ENCODE measurements at regions of chr19 and their contacts with region 1.

Region 1: GRCh38 chr19:8355631-8356402 is 8.1 kb upstream of the ANGPTL4 start:
- DNase-seq: no peak
- ATAC-seq: peak; percentile 70
- H3K4me3 Mint-ChIP-seq: no peak overlapping the region
- H3K27ac Mint-ChIP-seq: no peak overlapping the region
- H3K4me1 Mint-ChIP-seq: peaks cover 10% of the 10 kb centered on the region
- H3K27me3 Mint-ChIP-seq: peaks cover 11% of the 10 kb centered on the region
- CTCF ChIP-seq: no peak

Region 2: GRCh38 chr19:8302357-8302691 is 53.5 kb before region 1 on chr19:
- CTCF ChIA-PET with region 1: no interaction called
- POLR2A ChIA-PET with region 1: no interaction called
- intact Hi-C with region 1: no loop called
- DNase-seq: no peak
- ATAC-seq: no peak
- H3K4me3 Mint-ChIP-seq: no peak overlapping the region
- H3K27ac Mint-ChIP-seq: no peak overlapping the region
- H3K4me1 Mint-ChIP-seq: peaks cover 18% of the 10 kb centered on the region
- H3K27me3 Mint-ChIP-seq: no peaks in the 10 kb centered on the region
- CTCF ChIP-seq: no peak

Region 3: DNA sequence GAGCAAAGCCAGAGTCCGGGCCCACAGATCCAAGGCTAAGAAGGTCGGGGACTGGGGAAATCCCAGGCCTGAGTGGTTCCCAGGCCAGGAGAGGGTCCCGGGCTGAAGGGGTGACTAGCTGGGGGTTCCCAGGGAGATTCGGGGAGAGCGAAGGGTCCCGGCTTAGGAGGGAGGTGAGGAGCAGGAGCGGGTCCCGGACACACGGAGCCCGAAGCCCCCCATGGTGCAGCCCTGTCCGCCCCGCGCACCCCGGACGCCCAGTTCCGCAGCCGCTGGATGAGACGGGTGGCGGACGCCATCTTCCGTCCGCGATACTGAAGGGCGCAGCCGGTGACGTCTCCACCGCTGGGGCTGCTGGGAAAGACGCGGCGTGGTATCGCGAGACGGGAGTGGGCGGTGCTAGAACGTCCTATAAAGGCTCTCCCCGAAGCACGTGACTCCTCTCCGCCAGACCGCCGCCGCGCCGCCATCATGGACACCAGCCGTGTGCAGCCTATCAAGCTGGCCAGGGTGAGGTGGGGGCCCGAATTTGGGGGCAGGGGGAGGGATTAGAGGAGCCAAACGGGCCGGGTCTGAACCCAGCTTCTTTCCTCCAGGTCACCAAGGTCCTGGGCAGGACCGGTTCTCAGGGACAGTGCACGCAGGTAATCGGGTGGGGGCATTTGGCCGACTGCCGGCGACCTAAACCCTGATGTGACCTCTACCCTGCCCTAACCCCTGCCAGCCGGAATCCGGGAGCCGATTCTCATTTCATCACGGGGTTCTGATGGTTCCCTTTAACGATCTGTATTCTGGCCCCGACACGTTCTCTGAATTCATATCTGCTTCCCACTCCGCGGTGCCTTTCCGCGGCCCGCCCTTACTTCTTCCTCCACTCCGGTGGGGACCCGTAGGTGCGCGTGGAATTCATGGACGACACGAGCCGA is 34.5 kb before region 1 on chr19 and contains the starts of genes NDUFA7 and RPS28:
- CTCF ChIA-PET with region 1: interaction called, 14 read pairs
- POLR2A ChIA-PET with region 1: interaction called, 3 read pairs
- intact Hi-C with region 1: no loop called
- DNase-seq: peak; percentile 99
- ATAC-seq: peak; percentile 94
- H3K4me3 Mint-ChIP-seq: peak within 1 kb of the TSS; percentile 97
- H3K27ac Mint-ChIP-seq: peak within 1 kb of the TSS; percentile 96
- H3K4me1 Mint-ChIP-seq: peaks cover 29% of the 10 kb centered on the region
- H3K27me3 Mint-ChIP-seq: no peaks in the 10 kb centered on the region
- CTCF ChIP-seq: no peak
- total RNA-seq, gene NDUFA7: 72.2 to 84.3 TPM
- total RNA-seq, gene RPS28: 2,450 to 2,492 TPM

Region 4: DNA sequence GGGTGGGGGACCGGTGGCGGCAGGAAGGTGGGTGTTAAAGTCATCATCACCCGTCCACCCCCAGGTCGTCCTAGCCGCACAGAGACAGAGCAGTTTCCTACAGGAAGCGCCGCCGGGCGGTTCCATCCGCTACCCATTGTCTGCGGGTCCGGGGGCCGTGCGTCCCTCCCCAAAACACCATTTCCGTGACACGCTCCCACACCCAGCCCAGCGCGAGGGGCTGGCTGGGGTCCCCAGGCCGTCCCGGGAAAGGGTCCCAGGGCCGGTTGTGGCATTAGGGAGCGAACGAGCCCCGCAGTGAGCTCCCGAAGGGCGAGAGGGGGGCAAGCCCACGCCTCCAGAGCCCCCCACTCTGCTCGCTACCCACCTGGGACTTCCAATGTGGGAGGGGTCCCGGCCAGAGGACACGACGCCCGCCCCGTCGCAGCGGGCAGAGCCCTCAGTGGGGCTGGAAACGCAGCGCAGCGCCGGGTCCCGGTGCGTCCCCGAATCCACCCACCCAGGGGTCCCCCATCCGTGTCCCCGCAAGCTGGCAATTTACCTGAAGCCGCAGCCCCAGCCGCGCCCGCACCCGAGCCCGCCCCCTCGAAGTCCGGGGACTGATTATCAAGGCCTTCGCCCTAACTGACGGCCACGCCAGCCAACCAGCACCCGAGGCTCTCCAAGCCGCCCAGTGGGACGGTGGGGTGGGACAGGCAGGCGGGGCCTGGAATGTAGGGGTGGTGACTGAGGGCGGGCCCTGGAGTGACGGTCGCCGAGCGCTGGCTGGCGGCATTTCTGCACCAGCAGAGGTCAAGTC is 12.9 kb before region 1 on chr19 and contains the start of gene KANK3:
- CTCF ChIA-PET with region 1: interaction called, 54 read pairs
- POLR2A ChIA-PET with region 1: interaction called, 4 read pairs
- intact Hi-C with region 1: no loop called
- DNase-seq: peak; percentile 97
- ATAC-seq: peak; percentile 100
- H3K4me3 Mint-ChIP-seq: peak within 1 kb of the TSS; percentile 72
- H3K27ac Mint-ChIP-seq: no peak within 1 kb of the TSS
- H3K4me1 Mint-ChIP-seq: peaks cover 8% of the 10 kb centered on the region
- H3K27me3 Mint-ChIP-seq: peaks cover 16% of the 10 kb centered on the region
- CTCF ChIP-seq: no peak
- total RNA-seq, gene KANK3: 3.6 TPM

Region 5: GRCh38 chr19:8389891-8390616 is 34.2 kb after region 1 on chr19 and contains the start of gene RAB11B:
- CTCF ChIA-PET with region 1: interaction called, 66 read pairs
- POLR2A ChIA-PET with region 1: interaction called, 7 read pairs
- intact Hi-C with region 1: loop called (anchors 5 kb)
- DNase-seq: peak; percentile 100
- ATAC-seq: peak; percentile 90
- H3K4me3 Mint-ChIP-seq: peak within 1 kb of the TSS; percentile 94
- H3K27ac Mint-ChIP-seq: peak within 1 kb of the TSS; percentile 98
- H3K4me1 Mint-ChIP-seq: peaks cover 26% of the 10 kb centered on the region
- H3K27me3 Mint-ChIP-seq: no peaks in the 10 kb centered on the region
- CTCF ChIP-seq: no peak
- total RNA-seq, gene RAB11B: 74.3 to 77.4 TPM

Region 6: GRCh38 chr19:8412783-8413628 is 57.2 kb after region 1 on chr19 and contains the start of gene MARCHF2:
- CTCF ChIA-PET with region 1: interaction called, 38 read pairs
- POLR2A ChIA-PET with region 1: no interaction called
- intact Hi-C with region 1: no loop called
- DNase-seq: peak; percentile 96
- ATAC-seq: peak; percentile 100
- H3K4me3 Mint-ChIP-seq: peak within 1 kb of the TSS; percentile 60
- H3K27ac Mint-ChIP-seq: no peak within 1 kb of the TSS
- H3K4me1 Mint-ChIP-seq: peaks cover 7% of the 10 kb centered on the region
- H3K27me3 Mint-ChIP-seq: no peaks in the 10 kb centered on the region
- CTCF ChIP-seq: peak; percentile 59
- total RNA-seq, gene MARCHF2: 8.0 to 8.6 TPM

Region 7: GRCh38 chr19:8444645-8445487 is 89.0 kb after region 1 on chr19 and contains the start of gene HNRNPM:
- CTCF ChIA-PET with region 1: interaction called, 11 read pairs
- POLR2A ChIA-PET with region 1: no interaction called
- intact Hi-C with region 1: no loop called
- DNase-seq: peak; percentile 100
- ATAC-seq: peak; percentile 96
- H3K4me3 Mint-ChIP-seq: peak within 1 kb of the TSS; percentile 95
- H3K27ac Mint-ChIP-seq: peak within 1 kb of the TSS; percentile 90
- H3K4me1 Mint-ChIP-seq: peaks cover 34% of the 10 kb centered on the region
- H3K27me3 Mint-ChIP-seq: no peaks in the 10 kb centered on the region
- CTCF ChIP-seq: no peak
- total RNA-seq, gene HNRNPM: 242 to 254 TPM